ENCODE measurements at regions of chr12 and their contacts with region 1.

Region 1: GRCh38 chr12:10186299-10186698 is 7.5 kb downstream of the TMEM52B start:
- DNase-seq: no peak
- H3K4me3 ChIP-seq: no peak overlapping the region
- H3K27ac ChIP-seq: no peak overlapping the region
- H3K4me1 ChIP-seq: no peaks in the 10 kb centered on the region
- H3K27me3 ChIP-seq: no peaks in the 10 kb centered on the region
- CTCF ChIP-seq: no peak
- POLR2A ChIP-seq: no peak

Region 2: GRCh38 chr12:10153271-10154144 is 32.8 kb before region 1 on chr12:
- intact Hi-C with region 1: loop called (anchors 5 kb)
- DNase-seq: peak in 1 of 2 donors; percentile 88
- H3K4me3 ChIP-seq: peak overlapping the region; percentile 50 to 57
- H3K27ac ChIP-seq: peak overlapping the region; percentile 86
- H3K4me1 ChIP-seq: peaks cover 6% of the 10 kb centered on the region
- H3K27me3 ChIP-seq: no peaks in the 10 kb centered on the region
- CTCF ChIP-seq: peak; percentile 70 to 87 (median 85)
- POLR2A ChIP-seq: no peak

Region 3: DNA sequence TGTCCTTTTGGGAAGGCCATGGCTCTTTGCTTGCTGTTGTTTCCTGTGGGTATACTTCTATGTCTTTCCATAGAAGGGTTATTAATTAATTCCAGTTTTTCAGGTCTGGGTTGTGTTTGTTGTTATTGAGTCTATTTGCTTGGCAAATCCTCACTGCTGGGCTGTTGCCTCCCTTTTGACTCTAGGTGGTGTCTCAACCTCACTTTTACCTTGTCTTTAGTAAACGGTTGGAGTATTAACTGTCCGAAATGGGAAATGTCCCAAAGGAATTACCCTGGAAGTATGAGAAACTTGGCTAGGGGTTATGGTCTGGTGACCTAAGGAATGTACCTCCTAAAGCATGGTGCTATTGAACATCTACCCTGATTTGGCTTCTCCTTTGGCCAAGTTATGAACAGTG is 681.1 kb after region 1 on chr12:
- intact Hi-C with region 1: no loop called
- DNase-seq: no peak
- H3K4me3 ChIP-seq: no peak overlapping the region
- H3K27ac ChIP-seq: no peak overlapping the region
- H3K4me1 ChIP-seq: no peaks in the 10 kb centered on the region
- H3K27me3 ChIP-seq: no peaks in the 10 kb centered on the region
- CTCF ChIP-seq: no peak
- POLR2A ChIP-seq: no peak